Breast epithelium (tissue), 4 donors: ENCODE measurements at regions of chr5 and their contacts with region 1.

Region 1: DNA sequence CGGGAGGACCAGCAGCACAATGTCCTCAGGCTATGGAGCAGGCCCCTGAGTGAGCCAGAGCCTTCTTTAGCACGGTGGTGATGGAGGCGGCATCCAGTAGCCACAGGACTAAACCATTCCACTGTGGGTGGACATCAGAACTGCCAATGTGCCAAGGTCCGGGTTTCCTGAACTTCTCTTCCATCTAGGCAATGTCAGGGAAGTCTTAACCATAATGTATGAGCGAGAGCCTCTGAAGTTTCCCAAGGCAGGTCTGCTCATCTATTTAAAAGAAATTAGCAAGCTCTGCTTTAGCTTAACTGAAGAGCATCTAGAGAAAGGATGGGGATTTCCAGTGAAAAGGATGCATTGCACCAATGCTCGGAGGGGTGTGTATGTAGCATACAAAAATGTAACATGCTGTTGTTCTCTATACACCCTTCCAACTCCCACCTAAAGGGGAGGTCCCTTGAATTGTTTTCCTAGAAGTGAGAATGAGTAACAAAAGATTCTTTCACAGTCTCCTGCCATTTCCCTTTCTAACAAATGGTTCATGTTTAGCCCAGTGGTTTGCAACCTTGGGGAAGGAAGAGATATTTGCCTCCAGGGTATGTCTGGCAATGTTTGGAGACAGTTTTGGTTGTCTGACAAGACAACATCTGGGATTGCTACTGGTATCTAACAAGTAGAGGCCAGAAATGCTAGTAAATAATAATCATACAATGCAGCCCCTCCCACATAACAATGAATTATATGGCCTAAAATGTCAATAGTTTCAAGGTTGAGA is 6.1 kb upstream of the RXFP3 start:
- DNase-seq: no peak
- H3K4me3 ChIP-seq: no peak overlapping the region
- H3K27ac ChIP-seq: no peak overlapping the region
- H3K4me1 ChIP-seq: no peaks in the 10 kb centered on the region
- H3K27me3 ChIP-seq: no peaks in the 10 kb centered on the region
- CTCF ChIP-seq: no peak
- POLR2A ChIP-seq: no peak

Region 2: GRCh38 chr5:33857037-33857436 is 73.1 kb before region 1 on chr5:
- intact Hi-C with region 1: no loop called
- DNase-seq: no peak
- H3K4me3 ChIP-seq: no peak overlapping the region
- H3K27ac ChIP-seq: no peak overlapping the region
- H3K4me1 ChIP-seq: no peaks in the 10 kb centered on the region
- H3K27me3 ChIP-seq: no peaks in the 10 kb centered on the region
- CTCF ChIP-seq: no peak
- POLR2A ChIP-seq: no peak

Region 3: DNA sequence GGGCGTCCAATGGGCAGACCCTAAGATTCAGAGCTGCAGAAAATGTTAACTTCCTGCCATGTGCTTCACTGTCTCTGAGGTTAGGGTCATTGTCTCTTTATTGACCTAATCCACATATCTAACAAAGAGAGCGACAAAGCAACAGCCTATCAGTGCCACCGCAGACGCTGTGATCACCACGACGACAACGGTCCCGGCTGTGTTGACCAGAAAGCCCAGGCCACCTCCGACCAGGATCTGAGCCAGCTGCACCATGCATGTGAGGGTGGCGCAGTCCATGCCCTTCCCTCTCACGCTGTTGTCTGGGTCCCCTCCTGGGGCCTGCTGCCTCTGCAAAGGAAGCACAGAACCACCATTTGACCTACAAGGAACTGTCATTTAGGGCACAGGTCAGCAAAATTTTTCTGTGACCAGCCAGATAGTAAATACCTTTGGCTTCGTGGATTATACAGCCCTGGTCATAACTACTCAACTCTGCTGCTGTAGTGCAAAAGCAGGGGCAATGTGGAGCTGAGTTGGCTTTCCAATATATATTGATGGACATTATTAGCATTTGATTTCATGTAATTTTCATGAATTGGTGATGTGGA is 14.5 kb after region 1 on chr5:
- intact Hi-C with region 1: no loop called
- DNase-seq: no peak
- H3K4me3 ChIP-seq: no peak overlapping the region
- H3K27ac ChIP-seq: no peak overlapping the region
- H3K4me1 ChIP-seq: no peaks in the 10 kb centered on the region
- H3K27me3 ChIP-seq: peaks cover 0 to 13% of the 10 kb centered on the region in 2 donors
- CTCF ChIP-seq: no peak
- POLR2A ChIP-seq: no peak

Region 4: DNA sequence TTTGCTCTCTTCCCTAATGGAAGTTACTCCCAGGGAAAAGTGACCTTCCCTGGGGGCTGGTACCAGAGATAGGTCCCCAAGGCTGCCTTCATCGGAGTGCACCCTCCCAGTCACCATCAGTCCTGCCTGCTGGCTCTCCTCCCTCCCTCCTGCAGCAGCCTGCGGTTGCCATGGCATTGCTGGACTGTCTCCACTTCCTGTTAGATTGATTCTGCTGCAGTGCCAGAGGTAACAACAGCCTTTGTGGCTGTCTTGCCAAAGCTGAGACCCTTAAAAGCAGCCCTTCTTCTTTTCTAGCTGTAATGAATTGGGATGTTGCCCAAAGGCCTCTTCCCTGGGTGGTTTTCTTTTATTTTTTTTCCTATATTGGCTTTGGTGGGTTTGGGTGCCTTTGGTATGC is 1378.3 kb after region 1 on chr5:
- intact Hi-C with region 1: loop called (anchors 10 kb)
- DNase-seq: no peak
- H3K4me3 ChIP-seq: no peak overlapping the region
- H3K27ac ChIP-seq: no peak overlapping the region
- H3K4me1 ChIP-seq: no peaks in the 10 kb centered on the region
- H3K27me3 ChIP-seq: no peaks in the 10 kb centered on the region
- CTCF ChIP-seq: no peak
- POLR2A ChIP-seq: no peak